Heart right ventricle (tissue), 16 donors: ENCODE measurements at regions of chr1 and their contacts with region 1.

Region 1: DNA sequence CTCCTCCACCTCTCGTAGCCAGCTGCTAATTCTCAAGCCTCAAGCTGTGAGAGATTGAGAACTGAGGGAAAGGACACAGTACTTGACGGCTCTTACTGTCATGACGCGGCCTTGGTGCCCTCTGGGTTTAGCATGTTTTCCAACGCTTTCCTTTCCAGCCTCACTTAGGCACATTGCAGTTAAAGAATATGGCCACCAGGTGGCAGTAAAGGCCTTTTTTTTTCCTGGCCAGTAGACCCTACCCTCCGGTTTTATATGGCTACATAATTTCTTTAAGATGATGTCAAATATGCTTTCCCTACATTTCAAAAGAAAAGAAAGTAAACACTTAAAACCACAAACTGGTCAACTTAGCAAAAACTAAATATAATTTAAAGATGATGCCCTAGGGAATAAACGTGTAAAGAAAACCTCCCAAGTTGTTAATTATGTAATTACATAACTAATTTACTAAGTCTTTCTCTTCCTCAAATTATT is 56.8 kb upstream of the PRDX6 start:
- DNase-seq: peak; percentile 23 to 54
- ATAC-seq: peak; percentile 84 to 93 (median 88)
- H3K4me3 ChIP-seq: peak overlapping the region in 1 of 10 donors; percentile 20
- H3K27ac ChIP-seq: peak overlapping the region in 1 of 10 donors; percentile 30
- H3K4me1 ChIP-seq: peaks cover 0 to 27% (median 3%) of the 10 kb centered on the region in 9 donors
- H3K27me3 ChIP-seq: no peaks in the 10 kb centered on the region
- CTCF ChIP-seq: peak; percentile 84 to 93 (median 91)

Region 2: DNA sequence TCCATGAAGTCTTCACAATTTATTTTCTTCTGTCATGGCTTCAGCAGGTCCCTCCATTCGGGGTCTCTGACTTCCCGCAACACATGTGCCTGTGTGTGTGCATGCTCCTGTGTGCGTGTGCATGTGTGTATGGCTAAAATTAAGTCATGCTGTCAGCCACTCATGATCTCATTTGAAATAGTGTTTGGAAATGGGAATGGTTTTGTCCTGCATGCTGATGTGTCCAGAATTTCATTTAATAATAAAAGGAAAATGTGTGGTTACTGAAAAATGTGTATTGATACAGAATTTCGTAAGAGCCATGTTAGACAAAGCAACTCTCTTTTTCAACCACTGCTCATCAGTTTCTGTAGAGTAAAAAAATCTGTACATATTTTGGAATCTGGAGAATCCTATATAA is 67.0 kb before region 1 on chr1:
- intact Hi-C with region 1: no loop called
- DNase-seq: no peak
- ATAC-seq: no peak
- H3K4me3 ChIP-seq: no peak overlapping the region
- H3K27ac ChIP-seq: no peak overlapping the region
- H3K4me1 ChIP-seq: peaks cover 0 to 7% (median 0%) of the 10 kb centered on the region in 9 donors
- H3K27me3 ChIP-seq: no peaks in the 10 kb centered on the region
- CTCF ChIP-seq: no peak

Region 3: DNA sequence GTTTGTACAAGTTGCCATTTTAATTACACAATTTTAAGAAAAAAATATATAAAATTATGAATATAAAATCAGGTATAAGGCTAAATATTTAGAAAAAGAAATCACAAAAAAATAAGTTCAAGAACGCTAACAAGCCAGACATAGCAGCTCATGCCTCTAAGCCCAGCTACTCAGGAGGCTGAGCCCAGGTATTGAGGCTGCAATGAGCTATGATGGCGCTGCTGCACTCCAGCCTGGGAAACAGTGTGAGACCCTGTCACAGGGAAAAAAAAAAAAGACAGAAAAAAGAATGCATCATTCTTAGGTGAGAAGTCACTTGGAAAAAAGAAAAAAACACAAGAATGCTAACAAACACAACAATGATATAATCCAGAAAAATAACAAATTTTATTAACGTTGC is 55.5 kb before region 1 on chr1:
- intact Hi-C with region 1: no loop called
- DNase-seq: no peak
- ATAC-seq: no peak
- H3K4me3 ChIP-seq: no peak overlapping the region
- H3K27ac ChIP-seq: no peak overlapping the region
- H3K4me1 ChIP-seq: peaks cover 0 to 9% (median 0%) of the 10 kb centered on the region in 9 donors
- H3K27me3 ChIP-seq: no peaks in the 10 kb centered on the region
- CTCF ChIP-seq: no peak

Region 4: DNA sequence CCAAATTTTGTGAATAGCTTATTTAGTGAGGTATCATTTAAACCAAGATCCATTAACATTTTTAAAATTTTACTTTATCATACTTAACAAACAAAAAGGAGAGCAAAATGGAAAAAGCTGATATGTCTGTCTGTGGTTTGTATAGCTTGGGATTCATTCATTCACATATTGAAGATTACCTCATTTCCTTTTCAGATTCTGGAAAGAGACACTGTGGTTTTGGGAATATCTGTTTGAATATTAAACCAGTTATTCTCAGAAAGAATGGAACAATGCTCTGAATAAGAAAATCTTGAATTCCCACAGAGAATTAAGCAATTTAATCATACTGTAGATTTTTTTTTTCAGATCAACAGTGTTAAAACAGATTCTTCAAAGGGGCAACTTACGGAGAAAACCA is 37.0 kb before region 1 on chr1:
- intact Hi-C with region 1: no loop called
- DNase-seq: no peak
- ATAC-seq: no peak
- H3K4me3 ChIP-seq: no peak overlapping the region
- H3K27ac ChIP-seq: no peak overlapping the region
- H3K4me1 ChIP-seq: no peaks in the 10 kb centered on the region
- H3K27me3 ChIP-seq: no peaks in the 10 kb centered on the region
- CTCF ChIP-seq: no peak

Region 5: DNA sequence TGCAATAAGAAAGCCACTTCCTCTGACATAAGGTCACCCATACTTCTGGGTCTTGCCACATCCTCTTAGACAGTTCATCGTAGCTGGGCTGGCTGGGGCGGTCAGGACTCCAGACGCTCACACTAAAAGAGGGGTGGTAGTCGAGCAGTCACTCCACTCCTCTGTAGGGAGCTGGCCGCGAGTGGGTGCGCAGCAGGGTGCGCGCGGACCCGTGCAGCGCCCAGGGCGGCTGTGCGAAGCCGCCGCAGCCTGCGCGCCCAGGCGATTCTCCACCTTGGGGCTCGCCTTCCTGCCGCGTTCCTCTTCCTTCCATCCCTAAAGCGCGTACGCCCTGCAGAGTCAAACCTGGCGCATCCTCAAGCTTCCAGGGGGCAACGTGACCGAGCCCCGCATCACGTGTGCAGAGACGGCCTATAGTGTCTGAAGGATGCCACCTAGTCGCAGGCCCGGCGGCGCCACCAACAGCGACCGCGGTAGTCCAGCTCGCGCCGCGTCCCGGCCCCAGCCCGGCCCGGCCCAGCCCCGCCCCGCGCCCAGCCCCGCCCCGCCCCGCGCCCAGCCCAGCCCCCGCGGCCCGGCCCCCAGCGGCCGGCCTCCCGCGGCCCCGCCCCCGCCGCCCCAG is 56.4 kb after region 1 on chr1:
- intact Hi-C with region 1: no loop called
- DNase-seq: peak; percentile 91 to 92
- ATAC-seq: peak; percentile 89 to 96 (median 91)
- H3K4me3 ChIP-seq: peak overlapping the region; percentile 56 to 95 (median 90)
- H3K27ac ChIP-seq: peak overlapping the region; percentile 64 to 99 (median 96)
- H3K4me1 ChIP-seq: peaks cover 4 to 76% (median 46%) of the 10 kb centered on the region in 9 donors
- H3K27me3 ChIP-seq: no peaks in the 10 kb centered on the region
- CTCF ChIP-seq: peak in 3 of 9 donors; percentile 9 to 36 (median 20)

Region 6: DNA sequence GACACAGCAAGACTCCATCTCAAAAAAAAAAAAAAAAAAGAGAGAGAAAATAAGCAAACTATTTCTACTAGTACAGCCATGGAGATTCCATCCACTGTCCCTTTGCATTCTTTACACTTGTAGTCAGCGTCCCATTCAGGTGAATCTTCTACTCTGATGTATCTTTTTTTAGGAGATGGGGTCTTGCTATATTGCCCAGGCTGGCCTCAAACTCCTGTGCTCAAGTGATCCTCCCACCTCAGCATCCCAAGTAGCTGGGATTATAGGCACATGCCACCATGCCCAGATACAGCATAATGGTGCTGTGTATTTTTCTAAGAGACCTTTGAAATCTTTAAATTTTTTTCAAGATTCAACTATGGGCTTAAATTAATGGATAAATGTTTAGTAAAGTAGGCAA is 412.4 kb after region 1 on chr1:
- intact Hi-C with region 1: loop called in 3 of 10 experiments (anchors 5 to 10 kb)
- DNase-seq: no peak
- ATAC-seq: no peak
- H3K4me3 ChIP-seq: no peak overlapping the region
- H3K27ac ChIP-seq: no peak overlapping the region
- H3K4me1 ChIP-seq: peaks cover 0 to 3% (median 0%) of the 10 kb centered on the region in 9 donors
- H3K27me3 ChIP-seq: no peaks in the 10 kb centered on the region
- CTCF ChIP-seq: no peak